Left cardiac atrium (tissue), 4 donors: ENCODE measurements at regions of chr5 and their contacts with region 1.

Region 1: DNA sequence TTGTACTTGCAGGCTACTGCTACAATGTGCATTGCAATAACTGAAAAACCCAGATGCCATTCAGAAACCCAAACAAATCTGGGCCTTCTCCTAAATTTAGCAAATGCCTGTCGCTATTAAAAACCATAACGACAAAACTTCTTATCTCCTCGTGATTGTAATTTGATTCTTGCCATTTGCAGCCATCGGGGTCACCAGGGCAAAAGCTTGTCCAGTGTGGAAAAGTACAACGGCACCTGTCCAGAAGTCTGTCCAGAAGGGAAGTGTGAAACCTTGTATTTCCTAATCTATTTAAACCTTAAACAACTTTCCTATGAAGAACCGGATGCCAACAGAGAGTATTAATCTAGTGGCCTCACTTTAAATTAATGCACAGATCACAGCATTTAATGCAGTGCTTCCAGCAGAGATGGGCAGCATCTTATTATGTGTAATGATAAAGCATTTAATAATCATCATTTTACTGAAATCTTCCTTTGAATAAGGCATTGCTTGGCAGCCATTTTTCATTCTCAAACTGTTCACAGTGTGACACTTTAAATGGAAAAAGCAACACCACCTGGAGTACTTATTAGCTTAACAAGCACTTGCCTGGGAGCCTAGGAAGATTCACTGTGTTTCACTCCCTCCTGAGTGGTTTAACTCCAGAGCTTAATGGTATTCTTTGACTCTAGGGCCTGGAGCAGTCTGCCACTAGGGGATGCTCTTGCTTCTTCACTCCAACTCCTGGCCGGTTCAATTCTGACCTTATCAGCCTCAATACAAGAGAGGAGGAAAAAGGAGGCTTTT is 4.9 kb upstream of the C7 start:
- DNase-seq: peak; percentile 67
- ATAC-seq: peak; percentile 93 to 95

Region 2: DNA sequence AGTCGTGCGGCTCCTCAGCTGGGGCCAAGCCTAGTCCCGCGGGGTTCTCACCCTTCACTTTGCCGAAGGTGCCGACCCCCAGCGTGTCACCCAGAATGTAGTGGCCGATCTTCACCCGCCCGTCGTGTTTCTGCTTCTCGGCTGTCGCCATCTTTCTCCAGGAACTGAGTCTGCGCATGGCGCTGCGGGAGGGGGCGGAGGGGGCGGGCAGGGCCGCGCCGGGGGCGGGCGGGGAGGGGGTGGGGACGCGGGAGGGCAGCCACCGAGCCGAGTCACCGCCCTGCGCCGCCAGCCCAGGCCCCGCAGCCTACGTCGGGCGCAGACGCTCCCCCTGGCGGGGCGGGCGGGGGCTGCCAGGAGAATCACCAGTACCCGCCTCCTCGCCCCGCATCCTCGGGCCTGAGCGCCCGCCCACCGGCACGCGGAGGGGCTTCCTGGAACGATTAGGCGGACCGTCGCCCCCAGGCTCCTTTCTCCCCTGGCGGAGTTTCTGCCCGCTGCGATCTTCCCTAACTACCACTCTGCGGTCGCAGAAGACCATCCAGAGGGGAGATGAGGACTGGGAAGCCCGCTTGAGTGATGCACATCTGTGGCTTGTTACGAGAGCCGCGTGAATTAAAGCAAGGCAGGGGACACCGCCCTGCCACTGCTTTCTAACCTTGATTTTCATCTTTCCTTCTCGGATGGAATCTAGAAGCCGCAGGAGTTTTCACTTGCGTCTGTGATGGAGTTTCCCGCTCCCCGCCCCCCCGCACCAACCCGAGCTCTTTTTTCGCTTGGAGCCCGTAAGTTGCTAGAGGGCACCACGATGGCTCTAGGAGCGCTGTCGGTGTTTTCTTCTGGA is 106.2 kb before region 1 on chr5 and contains the start of gene PRKAA1:
- intact Hi-C with region 1: no loop called
- DNase-seq: peak; percentile 92
- ATAC-seq: peak; percentile 95 to 96
- total RNA-seq, gene PRKAA1: 41.8 to 57.6 TPM

Region 3: DNA sequence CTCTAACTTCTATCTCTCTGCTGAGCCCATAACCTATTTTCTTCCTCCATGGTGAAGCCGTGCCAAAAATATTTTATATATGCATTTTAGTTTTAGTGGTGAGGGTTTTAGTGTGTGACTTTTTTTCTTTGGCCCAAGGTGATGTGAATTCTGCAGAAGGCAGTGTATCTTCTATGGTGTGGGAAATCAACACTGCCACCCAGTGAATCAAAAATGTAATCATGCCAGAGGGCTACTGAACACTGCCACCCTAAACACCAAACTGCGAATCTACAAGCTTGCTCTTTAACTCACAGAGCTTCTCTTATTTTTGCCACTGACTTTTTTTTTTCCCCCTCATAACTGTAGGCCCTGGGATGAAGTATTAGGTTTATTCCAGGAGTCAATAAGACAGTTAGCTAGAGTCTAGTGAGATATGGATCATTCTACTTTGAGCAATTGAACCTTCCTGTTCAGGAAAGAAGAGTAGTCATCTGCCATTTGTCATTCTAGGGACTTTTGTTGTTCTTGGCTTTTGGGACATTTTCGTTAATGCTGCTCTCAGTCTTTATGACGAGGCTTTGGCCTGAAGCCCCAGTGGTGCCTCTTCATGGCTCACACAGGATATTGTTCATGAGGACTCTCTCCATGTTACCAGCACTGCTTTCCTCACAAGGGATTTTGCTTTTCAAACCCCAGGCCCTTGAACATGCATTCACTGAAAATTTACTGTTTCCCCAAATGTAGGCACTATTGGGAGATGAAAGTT is 58.0 kb after region 1 on chr5:
- intact Hi-C with region 1: loop called in 1 of 2 experiments (anchors 2 kb)
- DNase-seq: no peak
- ATAC-seq: no peak

Region 4: DNA sequence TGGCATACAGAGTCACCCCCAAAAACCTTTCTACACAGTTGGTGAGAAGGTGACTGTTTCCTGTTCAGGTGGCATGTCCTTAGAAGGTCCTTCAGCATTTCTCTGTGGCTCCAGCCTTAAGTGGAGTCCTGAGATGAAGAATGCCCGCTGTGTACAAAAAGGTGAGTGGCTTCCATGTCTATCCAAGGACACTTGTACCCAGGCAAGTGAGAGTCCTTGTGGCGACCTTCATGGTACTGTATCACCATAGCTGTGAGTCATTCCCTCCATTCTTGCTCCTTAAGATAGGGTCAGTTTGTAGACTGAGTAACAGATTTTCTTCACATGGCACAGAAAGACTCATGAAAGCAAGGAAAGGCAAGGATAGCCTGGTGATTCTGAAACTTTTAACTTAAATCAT is 68.0 kb after region 1 on chr5:
- intact Hi-C with region 1: no loop called
- DNase-seq: no peak
- ATAC-seq: no peak

Region 5: GRCh38 chr5:41115281-41115680 is 210.9 kb after region 1 on chr5:
- intact Hi-C with region 1: loop called in 1 of 2 experiments (anchors 10 kb)
- DNase-seq: no peak
- ATAC-seq: no peak

Region 6: GRCh38 chr5:41641621-41642020 is 737.2 kb after region 1 on chr5:
- intact Hi-C with region 1: loop called in 1 of 2 experiments (anchors 10 kb)
- DNase-seq: no peak
- ATAC-seq: no peak

Region 7: GRCh38 chr5:41843456-41844370 is 939.3 kb after region 1 on chr5:
- intact Hi-C with region 1: loop called (anchors 10 kb)
- DNase-seq: no peak
- ATAC-seq: peak; percentile 69 to 70